ENCODE measurements at regions of chrX and their contacts with region 1.

Region 1: GRCh38 chrX:129726307-129727111 is 12.3 kb upstream of the XPNPEP2 start:
- DNase-seq: peak in 1 of 9 donors; percentile 17
- ATAC-seq: no peak
- H3K4me3 ChIP-seq: no peak overlapping the region
- H3K4me3 Mint-ChIP-seq: no peak overlapping the region
- H3K27ac ChIP-seq: no peak overlapping the region
- H3K27ac Mint-ChIP-seq: peak overlapping the region in 1 of 9 donors; percentile 42
- H3K4me1 ChIP-seq: peaks cover 9 to 17% of the 10 kb centered on the region in 2 donors
- H3K4me1 Mint-ChIP-seq: peaks cover 22 to 68% (median 51%) of the 10 kb centered on the region in 7 donors
- H3K27me3 ChIP-seq: no peaks in the 10 kb centered on the region
- H3K27me3 Mint-ChIP-seq: no peaks in the 10 kb centered on the region

Region 2: GRCh38 chrX:129433461-129433860 is 293.0 kb before region 1 on chrX:
- CTCF ChIA-PET with region 1: no interaction called
- POLR2A ChIA-PET with region 1: no interaction called
- intact Hi-C with region 1: no loop called
- DNase-seq: no peak
- ATAC-seq: no peak
- H3K4me3 ChIP-seq: no peak overlapping the region
- H3K4me3 Mint-ChIP-seq: no peak overlapping the region
- H3K27ac ChIP-seq: no peak overlapping the region
- H3K27ac Mint-ChIP-seq: no peak overlapping the region
- H3K4me1 ChIP-seq: no peaks in the 10 kb centered on the region
- H3K4me1 Mint-ChIP-seq: no peaks in the 10 kb centered on the region
- H3K27me3 ChIP-seq: no peaks in the 10 kb centered on the region
- H3K27me3 Mint-ChIP-seq: peaks cover 0 to 3% (median 0%) of the 10 kb centered on the region in 5 donors

Region 3: DNA sequence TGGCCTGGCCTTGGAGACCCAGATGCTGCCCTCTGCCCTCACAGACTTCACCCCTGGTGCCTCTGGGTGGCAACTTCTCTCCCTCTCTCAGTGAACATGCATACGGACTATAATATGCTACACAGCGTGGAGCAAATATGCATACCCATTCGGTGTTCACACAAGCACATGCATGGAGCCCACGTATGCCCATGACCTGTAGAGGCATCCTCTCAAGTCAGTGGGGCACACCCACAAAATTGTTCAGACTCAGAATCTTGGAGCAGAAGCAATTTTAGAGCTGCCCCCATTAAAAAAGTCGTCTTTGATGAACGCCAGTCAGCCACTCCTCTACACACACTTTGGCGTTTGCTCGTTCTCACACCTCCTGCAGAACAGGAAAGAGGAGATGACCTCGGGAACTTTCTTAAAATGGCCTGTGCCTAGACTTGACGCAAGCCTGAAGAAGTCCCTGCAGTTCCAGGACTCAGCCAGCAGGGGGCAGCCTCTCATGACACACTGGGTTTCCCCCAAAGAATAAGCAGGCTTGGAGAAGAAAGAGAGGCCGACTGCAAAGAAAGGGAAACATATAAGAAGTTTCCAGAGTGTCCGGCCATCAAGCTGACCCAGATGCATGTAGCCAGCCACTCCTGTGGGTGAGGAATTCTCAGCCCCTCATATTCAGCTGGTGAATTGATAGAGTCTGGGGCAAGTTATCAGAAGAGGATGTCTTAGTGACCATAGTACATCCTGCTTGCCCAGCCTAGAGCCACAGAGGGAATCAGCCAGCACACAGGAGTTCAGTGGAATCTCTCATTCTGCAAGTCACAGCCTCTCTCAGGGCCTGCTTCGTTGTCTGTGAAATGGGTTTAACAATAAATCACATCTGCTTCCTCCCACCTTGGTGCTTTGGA is 89.0 kb before region 1 on chrX:
- CTCF ChIA-PET with region 1: interaction called, 3 read pairs
- POLR2A ChIA-PET with region 1: no interaction called
- intact Hi-C with region 1: loop called (anchors 1 to 5 kb)
- DNase-seq: peak; percentile 48 to 80 (median 63)
- ATAC-seq: peak; percentile 92
- H3K4me3 ChIP-seq: no peak overlapping the region
- H3K4me3 Mint-ChIP-seq: no peak overlapping the region
- H3K27ac ChIP-seq: no peak overlapping the region
- H3K27ac Mint-ChIP-seq: peak overlapping the region in 3 of 9 donors; percentile 34 to 68 (median 55)
- H3K4me1 ChIP-seq: peaks cover 0 to 4% of the 10 kb centered on the region in 2 donors
- H3K4me1 Mint-ChIP-seq: peaks cover 0 to 10% (median 0%) of the 10 kb centered on the region in 7 donors
- H3K27me3 ChIP-seq: no peaks in the 10 kb centered on the region
- H3K27me3 Mint-ChIP-seq: no peaks in the 10 kb centered on the region

Region 4: GRCh38 chrX:129654419-129655165 is 71.9 kb before region 1 on chrX and contains the start of gene APLN:
- CTCF ChIA-PET with region 1: no interaction called
- POLR2A ChIA-PET with region 1: no interaction called
- intact Hi-C with region 1: loop called in 1 of 2 experiments (anchors 5 kb)
- DNase-seq: peak in 2 of 9 donors; percentile 18 to 28
- ATAC-seq: peak; percentile 64
- H3K4me3 ChIP-seq: peak within 1 kb of the TSS; percentile 9
- H3K4me3 Mint-ChIP-seq: peak within 1 kb of the TSS; percentile 54 to 85 (median 68)
- H3K27ac ChIP-seq: no peak within 1 kb of the TSS
- H3K27ac Mint-ChIP-seq: peak within 1 kb of the TSS in 1 of 9 donors; percentile 9
- H3K4me1 ChIP-seq: peaks cover 3 to 7% of the 10 kb centered on the region in 2 donors
- H3K4me1 Mint-ChIP-seq: peaks cover 6 to 12% (median 9%) of the 10 kb centered on the region in 7 donors
- H3K27me3 ChIP-seq: no peaks in the 10 kb centered on the region
- H3K27me3 Mint-ChIP-seq: peaks cover 4 to 25% (median 5%) of the 10 kb centered on the region in 5 donors
- total RNA-seq, gene APLN: 0.10 TPM in 1 of 5 experiments, not detected in the others

Region 5: DNA sequence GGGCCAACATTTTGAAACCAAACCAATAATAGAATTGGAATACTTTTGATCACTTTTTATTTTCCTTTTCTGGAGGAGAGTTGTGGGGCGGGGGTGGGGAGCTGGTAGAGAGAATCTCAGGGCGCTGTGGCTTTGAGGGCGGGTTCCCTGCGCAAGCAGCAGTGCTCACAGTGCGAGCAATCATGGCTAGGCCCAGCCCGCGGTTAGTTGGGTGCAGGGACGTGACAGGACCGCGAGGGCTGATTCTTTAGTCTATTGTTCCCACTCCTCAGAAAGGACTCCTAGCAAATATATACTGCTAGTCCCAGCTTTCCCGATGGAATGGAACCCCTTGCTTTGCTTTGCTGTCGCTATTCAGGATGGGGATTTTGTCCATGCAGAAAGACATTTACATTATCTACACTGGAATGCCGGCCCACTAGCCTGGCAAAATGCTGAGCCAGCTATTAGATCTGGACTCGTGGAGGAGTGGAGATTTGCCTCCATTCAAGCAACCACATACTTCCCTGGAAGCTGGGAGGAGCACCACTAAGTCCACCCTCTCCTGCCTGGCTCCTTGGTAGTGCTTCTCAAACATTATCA is 47.8 kb before region 1 on chrX:
- CTCF ChIA-PET with region 1: no interaction called
- POLR2A ChIA-PET with region 1: interaction called, 3 read pairs
- intact Hi-C with region 1: loop called (anchors 5 kb)
- DNase-seq: peak in 7 of 9 donors; percentile 6 to 40 (median 34)
- ATAC-seq: peak; percentile 78
- H3K4me3 ChIP-seq: peak overlapping the region; percentile 53
- H3K4me3 Mint-ChIP-seq: peak overlapping the region; percentile 62 to 85 (median 70)
- H3K27ac ChIP-seq: peak overlapping the region; percentile 38
- H3K27ac Mint-ChIP-seq: peak overlapping the region in 7 of 9 donors; percentile 5 to 91 (median 48)
- H3K4me1 ChIP-seq: peaks cover 5 to 14% of the 10 kb centered on the region in 2 donors
- H3K4me1 Mint-ChIP-seq: peaks cover 10 to 36% (median 23%) of the 10 kb centered on the region in 7 donors
- H3K27me3 ChIP-seq: no peaks in the 10 kb centered on the region
- H3K27me3 Mint-ChIP-seq: peaks cover 0 to 21% (median 0%) of the 10 kb centered on the region in 5 donors

Region 6: GRCh38 chrX:129737916-129738315 is 11.4 kb after region 1 on chrX:
- CTCF ChIA-PET with region 1: interaction called, 3 read pairs
- POLR2A ChIA-PET with region 1: interaction called, 10 read pairs
- intact Hi-C with region 1: no loop called
- DNase-seq: no peak
- ATAC-seq: peak; percentile 63
- H3K4me3 ChIP-seq: no peak overlapping the region
- H3K4me3 Mint-ChIP-seq: peak overlapping the region in 1 of 10 donors; percentile 42
- H3K27ac ChIP-seq: no peak overlapping the region
- H3K27ac Mint-ChIP-seq: peak overlapping the region in 2 of 9 donors; percentile 53 to 72
- H3K4me1 ChIP-seq: peaks cover 8 to 17% of the 10 kb centered on the region in 2 donors
- H3K4me1 Mint-ChIP-seq: peaks cover 14 to 45% (median 29%) of the 10 kb centered on the region in 7 donors
- H3K27me3 ChIP-seq: no peaks in the 10 kb centered on the region
- H3K27me3 Mint-ChIP-seq: no peaks in the 10 kb centered on the region

Region 7: GRCh38 chrX:129772796-129773431 is 46.4 kb after region 1 on chrX:
- CTCF ChIA-PET with region 1: interaction called, 3 read pairs
- POLR2A ChIA-PET with region 1: interaction called, 3 read pairs
- intact Hi-C with region 1: loop called in 1 of 2 experiments (anchors 1 kb)
- DNase-seq: no peak
- ATAC-seq: peak; percentile 69
- H3K4me3 ChIP-seq: no peak overlapping the region
- H3K4me3 Mint-ChIP-seq: peak overlapping the region; percentile 44 to 79 (median 66)
- H3K27ac ChIP-seq: peak overlapping the region; percentile 49
- H3K27ac Mint-ChIP-seq: peak overlapping the region; percentile 86 to 98 (median 92)
- H3K4me1 ChIP-seq: peaks cover 75% of the 10 kb centered on the region in 2 donors
- H3K4me1 Mint-ChIP-seq: peaks cover 14 to 94% (median 70%) of the 10 kb centered on the region in 7 donors
- H3K27me3 ChIP-seq: no peaks in the 10 kb centered on the region
- H3K27me3 Mint-ChIP-seq: no peaks in the 10 kb centered on the region

Measured in naive thymus-derived CD4-positive, alpha-beta T cell (primary cell).